ENCODE measurements at regions of chr12 and their contacts with region 1.

Region 1: DNA sequence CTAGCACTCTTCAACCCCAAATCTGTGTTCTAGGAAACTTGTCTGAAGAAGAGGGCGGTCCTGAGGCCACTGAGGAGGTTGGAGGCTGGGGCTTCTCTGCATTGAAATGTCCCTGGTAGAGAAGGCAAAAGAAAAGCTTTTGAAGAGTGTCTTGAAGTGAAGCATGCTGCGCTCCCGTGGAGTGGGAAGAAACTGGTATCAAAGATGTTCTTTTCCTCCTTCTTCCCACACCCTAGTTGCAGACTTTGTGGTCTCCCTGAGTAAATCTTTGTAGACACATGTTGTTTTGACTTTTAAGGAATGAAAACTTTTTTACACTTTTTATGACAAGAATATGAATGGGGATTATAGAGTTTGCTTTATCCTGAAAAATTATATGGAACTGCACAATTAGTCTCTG is 59.0 kb upstream of the ANP32D start:
- DNase-seq: no peak
- ATAC-seq: no peak
- H3K4me3 ChIP-seq: no peak overlapping the region
- H3K4me3 Mint-ChIP-seq: no peak overlapping the region
- H3K27ac ChIP-seq: no peak overlapping the region
- H3K27ac Mint-ChIP-seq: no peak overlapping the region
- H3K4me1 ChIP-seq: peaks cover 12% of the 10 kb centered on the region
- H3K4me1 Mint-ChIP-seq: peaks cover 18% of the 10 kb centered on the region
- H3K27me3 ChIP-seq: no peaks in the 10 kb centered on the region
- H3K27me3 Mint-ChIP-seq: peaks cover 11% of the 10 kb centered on the region
- CTCF ChIP-seq: no peak

Region 2: GRCh38 chr12:48379780-48380179 is 33.6 kb before region 1 on chr12:
- CTCF ChIA-PET with region 1: no interaction called
- POLR2A ChIA-PET with region 1: no interaction called
- intact Hi-C with region 1: loop called in 1 of 2 experiments (anchors 1 kb)
- DNase-seq: no peak
- ATAC-seq: no peak
- H3K4me3 ChIP-seq: no peak overlapping the region
- H3K4me3 Mint-ChIP-seq: no peak overlapping the region
- H3K27ac ChIP-seq: no peak overlapping the region
- H3K27ac Mint-ChIP-seq: no peak overlapping the region
- H3K4me1 ChIP-seq: no peaks in the 10 kb centered on the region
- H3K4me1 Mint-ChIP-seq: no peaks in the 10 kb centered on the region
- H3K27me3 ChIP-seq: no peaks in the 10 kb centered on the region
- H3K27me3 Mint-ChIP-seq: no peaks in the 10 kb centered on the region
- CTCF ChIP-seq: no peak

Measured in CD8-positive, alpha-beta T cell (primary cell).